Transverse colon (tissue), 4 donors: ENCODE measurements at regions of chr10 and their contacts with region 1.

Region 1: GRCh38 chr10:58781873-58782488 is 269.3 kb downstream of the BICC1 start:
- DNase-seq: no peak
- H3K4me3 ChIP-seq: no peak overlapping the region
- H3K27ac ChIP-seq: peak overlapping the region in 1 of 4 donors; percentile 66
- H3K4me1 ChIP-seq: peaks cover 2 to 22% (median 17%) of the 10 kb centered on the region in 4 donors
- H3K27me3 ChIP-seq: no peaks in the 10 kb centered on the region
- CTCF ChIP-seq: peak; percentile 54 to 57 (median 56)
- EP300 ChIP-seq: no peak
- POLR2A ChIP-seq: no peak

Region 2: DNA sequence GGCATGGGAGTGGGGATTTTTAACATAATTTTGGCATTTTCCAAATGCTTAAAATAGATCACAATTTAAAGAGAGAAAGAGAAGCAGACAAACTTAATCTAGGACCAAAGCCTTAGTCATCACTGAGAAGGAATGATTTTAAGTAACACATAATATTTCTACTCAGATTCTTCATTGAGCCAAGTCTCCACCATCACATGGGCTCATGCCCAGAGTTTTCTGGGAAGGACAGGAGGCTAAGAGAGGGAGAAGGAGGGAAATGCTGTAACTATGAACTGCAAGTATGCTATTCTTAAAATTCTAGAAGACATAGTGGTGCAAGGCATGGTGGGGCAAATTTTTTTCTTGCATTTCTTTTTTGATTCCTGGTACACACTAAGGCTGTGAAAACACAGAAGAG is 471.0 kb before region 1 on chr10:
- in situ Hi-C with region 1: no loop called
- intact Hi-C with region 1: no loop called
- DNase-seq: no peak
- H3K4me3 ChIP-seq: no peak overlapping the region
- H3K27ac ChIP-seq: no peak overlapping the region
- H3K4me1 ChIP-seq: peaks cover 0 to 13% (median 0%) of the 10 kb centered on the region in 4 donors
- H3K27me3 ChIP-seq: no peaks in the 10 kb centered on the region
- CTCF ChIP-seq: no peak
- EP300 ChIP-seq: no peak
- POLR2A ChIP-seq: no peak

Region 3: DNA sequence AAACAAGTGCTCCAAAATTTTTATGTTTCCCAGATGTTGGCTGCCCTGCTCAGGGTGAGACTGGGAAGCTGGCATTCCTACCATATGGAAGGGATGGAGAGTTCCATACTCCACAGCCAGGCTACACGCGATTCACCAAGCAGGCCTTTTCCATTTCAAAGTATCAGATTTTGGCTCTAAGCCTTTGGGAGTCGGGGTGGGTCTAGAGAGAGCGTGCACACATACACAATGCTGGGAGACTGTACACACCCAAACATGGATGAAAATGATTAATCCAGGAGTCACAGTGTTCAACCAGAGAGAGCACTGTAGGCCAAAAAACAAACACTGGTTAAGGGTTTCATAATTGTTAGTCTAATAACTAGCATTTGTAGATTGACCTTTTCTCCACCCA is 25.6 kb after region 1 on chr10:
- in situ Hi-C with region 1: no loop called
- intact Hi-C with region 1: no loop called
- DNase-seq: no peak
- H3K4me3 ChIP-seq: no peak overlapping the region
- H3K27ac ChIP-seq: no peak overlapping the region
- H3K4me1 ChIP-seq: no peaks in the 10 kb centered on the region
- H3K27me3 ChIP-seq: no peaks in the 10 kb centered on the region
- CTCF ChIP-seq: no peak
- EP300 ChIP-seq: no peak
- POLR2A ChIP-seq: no peak

Region 4: GRCh38 chr10:58952747-58953466 is 170.9 kb after region 1 on chr10:
- in situ Hi-C with region 1: loop called in 1 of 4 experiments (anchors 10 kb)
- intact Hi-C with region 1: no loop called
- DNase-seq: peak; percentile 36
- H3K4me3 ChIP-seq: no peak overlapping the region
- H3K27ac ChIP-seq: peak overlapping the region; percentile 11 to 61 (median 42)
- H3K4me1 ChIP-seq: peaks cover 0 to 4% (median 2%) of the 10 kb centered on the region in 4 donors
- H3K27me3 ChIP-seq: no peaks in the 10 kb centered on the region
- CTCF ChIP-seq: peak; percentile 65 to 80 (median 73)
- EP300 ChIP-seq: no peak
- POLR2A ChIP-seq: no peak

Region 5: GRCh38 chr10:59606551-59606961 is 824.6 kb after region 1 on chr10:
- in situ Hi-C with region 1: loop called in 1 of 4 experiments (anchors 25 kb)
- intact Hi-C with region 1: no loop called
- DNase-seq: no peak
- H3K4me3 ChIP-seq: no peak overlapping the region
- H3K27ac ChIP-seq: no peak overlapping the region
- H3K4me1 ChIP-seq: peaks cover 0 to 19% (median 10%) of the 10 kb centered on the region in 4 donors
- H3K27me3 ChIP-seq: no peaks in the 10 kb centered on the region
- CTCF ChIP-seq: no peak
- EP300 ChIP-seq: no peak
- POLR2A ChIP-seq: no peak

Region 6: DNA sequence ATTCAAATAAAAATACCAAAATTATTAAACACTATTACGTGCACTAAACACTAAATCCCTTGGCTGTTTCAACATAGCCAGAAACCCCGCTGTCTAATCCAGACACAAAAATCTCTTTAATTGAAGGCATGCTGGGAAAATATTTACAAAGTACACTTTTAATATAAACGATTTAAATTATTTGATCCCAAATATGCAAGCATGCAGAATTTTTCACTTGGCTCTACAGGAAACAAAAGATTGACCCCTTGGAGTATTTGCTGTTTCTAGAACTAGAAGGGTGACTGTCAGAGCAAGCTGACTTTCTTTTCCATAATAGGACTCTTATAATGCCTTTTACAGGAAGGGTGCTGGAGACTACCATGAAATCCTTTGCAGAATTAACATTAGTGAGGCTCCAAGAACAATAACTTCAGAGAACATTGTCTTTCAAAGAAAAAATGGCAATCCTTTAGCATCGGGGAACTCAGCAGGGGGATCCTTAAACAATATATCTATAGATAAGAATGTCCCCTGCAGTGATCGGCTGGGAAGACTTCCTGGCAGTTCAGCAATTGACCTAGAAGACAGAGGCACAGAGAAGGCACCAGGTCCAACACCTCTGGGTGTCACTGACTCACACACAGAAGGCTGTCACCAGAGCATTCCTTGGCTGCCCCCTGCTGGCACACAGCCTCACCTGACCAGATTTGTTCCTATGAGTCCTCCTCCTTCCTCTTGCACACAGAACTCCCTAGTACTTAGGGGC is 1027.1 kb after region 1 on chr10:
- in situ Hi-C with region 1: loop called in 1 of 4 experiments (anchors 25 kb)
- intact Hi-C with region 1: no loop called
- DNase-seq: peak; percentile 86
- H3K4me3 ChIP-seq: no peak overlapping the region
- H3K27ac ChIP-seq: peak overlapping the region in 1 of 4 donors; percentile 4
- H3K4me1 ChIP-seq: peaks cover 0 to 8% (median 0%) of the 10 kb centered on the region in 4 donors
- H3K27me3 ChIP-seq: no peaks in the 10 kb centered on the region
- CTCF ChIP-seq: peak; percentile 60 to 79 (median 71)
- EP300 ChIP-seq: no peak
- POLR2A ChIP-seq: no peak